ENCODE measurements at regions of chr17 and their contacts with region 1.

Region 1: GRCh38 chr17:58517734-58518609 is 3.5 kb upstream of the MTMR4 start:
- DNase-seq: peak; percentile 100
- ATAC-seq: peak; percentile 84 to 90
- H3K4me3 ChIP-seq: peak overlapping the region; percentile 72
- H3K27ac ChIP-seq: peak overlapping the region; percentile 76 to 87
- H3K4me1 ChIP-seq: peaks cover 15% of the 10 kb centered on the region
- CTCF ChIP-seq: no peak
- EP300 ChIP-seq: no peak
- POLR2A ChIP-seq: peak; percentile 48
- RAD21 ChIP-seq: no peak

Region 2: DNA sequence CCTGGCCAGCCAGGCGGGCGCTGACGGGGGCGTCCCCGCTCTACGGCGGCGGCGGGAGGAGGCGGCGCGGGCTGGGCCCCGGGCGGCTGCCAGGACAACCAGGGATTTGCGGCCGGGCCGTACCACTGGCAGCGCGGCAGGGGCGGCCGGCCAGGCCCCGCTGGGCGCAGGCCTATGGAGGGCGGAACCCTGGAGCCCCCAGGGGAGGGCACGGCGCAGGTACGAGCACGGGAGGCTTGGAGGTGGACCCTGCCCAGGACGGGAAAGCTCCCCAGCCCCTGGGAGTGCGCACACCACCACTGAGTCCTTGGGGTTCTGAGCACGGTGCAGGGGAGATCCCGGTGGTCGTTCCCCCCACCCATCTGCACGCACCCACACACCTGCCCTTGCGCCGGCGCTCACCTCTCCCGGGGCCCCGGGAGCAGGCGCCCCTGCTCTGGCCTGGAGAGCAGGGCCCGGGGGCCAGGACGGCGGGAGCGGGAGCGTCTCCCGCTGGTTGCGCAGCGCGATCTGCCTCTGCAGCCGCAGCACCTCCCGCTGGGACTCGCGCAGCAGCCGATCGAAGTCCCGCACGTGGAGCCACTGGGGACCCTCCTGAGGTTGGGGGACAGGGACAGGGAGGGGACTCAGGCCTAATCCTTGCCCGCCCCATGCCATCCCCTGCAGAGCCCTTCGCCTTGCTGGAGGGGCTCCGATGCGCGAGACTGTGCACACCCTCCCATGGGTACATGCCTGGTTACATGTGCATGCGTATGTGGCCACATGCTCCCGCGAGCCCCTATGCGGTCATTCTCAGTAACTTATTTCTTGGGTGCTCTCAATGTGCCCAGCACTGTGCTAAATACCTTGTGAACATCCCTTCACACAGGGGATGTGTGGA is 193.3 kb before region 1 on chr17:
- CTCF ChIA-PET with region 1: no interaction called
- POLR2A ChIA-PET with region 1: no interaction called
- DNase-seq: no peak
- ATAC-seq: no peak
- H3K4me3 ChIP-seq: no peak overlapping the region
- H3K27ac ChIP-seq: no peak overlapping the region
- H3K4me1 ChIP-seq: peaks cover 9% of the 10 kb centered on the region
- CTCF ChIP-seq: no peak
- EP300 ChIP-seq: no peak
- POLR2A ChIP-seq: no peak
- RAD21 ChIP-seq: no peak

Region 3: GRCh38 chr17:58411438-58411797 is 106.6 kb before region 1 on chr17:
- CTCF ChIA-PET with region 1: no interaction called
- POLR2A ChIA-PET with region 1: no interaction called
- DNase-seq: no peak
- ATAC-seq: no peak
- H3K4me3 ChIP-seq: no peak overlapping the region
- H3K27ac ChIP-seq: no peak overlapping the region
- H3K4me1 ChIP-seq: peaks cover 39% of the 10 kb centered on the region; the same call in 2 of the 3 replicates
- CTCF ChIP-seq: no peak
- EP300 ChIP-seq: no peak
- POLR2A ChIP-seq: no peak
- RAD21 ChIP-seq: no peak

Region 4: GRCh38 chr17:58492238-58493121 is 25.5 kb before region 1 on chr17:
- CTCF ChIA-PET with region 1: interaction called, 12 read pairs
- POLR2A ChIA-PET with region 1: no interaction called
- DNase-seq: no peak
- ATAC-seq: no peak
- H3K4me3 ChIP-seq: no peak overlapping the region
- H3K27ac ChIP-seq: no peak overlapping the region
- H3K4me1 ChIP-seq: no peaks in the 10 kb centered on the region
- CTCF ChIP-seq: no peak
- EP300 ChIP-seq: no peak
- POLR2A ChIP-seq: no peak
- RAD21 ChIP-seq: no peak

Region 5: GRCh38 chr17:58531661-58532554 is 13.9 kb after region 1 on chr17:
- CTCF ChIA-PET with region 1: interaction called, 187 read pairs
- POLR2A ChIA-PET with region 1: interaction called, 8 read pairs
- DNase-seq: no peak
- ATAC-seq: peak; percentile 51 to 66
- H3K4me3 ChIP-seq: peak overlapping the region; percentile 71
- H3K27ac ChIP-seq: peak overlapping the region; percentile 61 to 81
- H3K4me1 ChIP-seq: peaks cover 24% of the 10 kb centered on the region
- CTCF ChIP-seq: no peak
- EP300 ChIP-seq: no peak
- POLR2A ChIP-seq: 0 out of 2 replicates have a peak, but pooled peaks have one; percentile 7
- RAD21 ChIP-seq: no peak

Region 6: GRCh38 chr17:58587702-58588254 is 69.8 kb after region 1 on chr17:
- CTCF ChIA-PET with region 1: interaction called, 18 read pairs
- POLR2A ChIA-PET with region 1: no interaction called
- DNase-seq: peak; percentile 69 to 81
- ATAC-seq: peak; percentile 91 to 96
- H3K4me3 ChIP-seq: no peak overlapping the region
- H3K27ac ChIP-seq: no peak overlapping the region
- H3K4me1 ChIP-seq: no peaks in the 10 kb centered on the region
- CTCF ChIP-seq: peak; percentile 93
- EP300 ChIP-seq: no peak
- POLR2A ChIP-seq: no peak
- RAD21 ChIP-seq: peak; percentile 89

Region 7: GRCh38 chr17:58666858-58667619 is 149.1 kb after region 1 on chr17:
- CTCF ChIA-PET with region 1: interaction called, 10 read pairs
- POLR2A ChIA-PET with region 1: no interaction called
- DNase-seq: peak; percentile 72 to 94
- ATAC-seq: peak; percentile 91 to 93
- H3K4me3 ChIP-seq: peak overlapping the region; percentile 46
- H3K27ac ChIP-seq: peak overlapping the region; percentile 40 to 72
- H3K4me1 ChIP-seq: peaks cover 10% of the 10 kb centered on the region; the same call in 1 of the 3 replicates
- CTCF ChIP-seq: no peak
- EP300 ChIP-seq: no peak
- POLR2A ChIP-seq: no peak
- RAD21 ChIP-seq: no peak

Region 8: DNA sequence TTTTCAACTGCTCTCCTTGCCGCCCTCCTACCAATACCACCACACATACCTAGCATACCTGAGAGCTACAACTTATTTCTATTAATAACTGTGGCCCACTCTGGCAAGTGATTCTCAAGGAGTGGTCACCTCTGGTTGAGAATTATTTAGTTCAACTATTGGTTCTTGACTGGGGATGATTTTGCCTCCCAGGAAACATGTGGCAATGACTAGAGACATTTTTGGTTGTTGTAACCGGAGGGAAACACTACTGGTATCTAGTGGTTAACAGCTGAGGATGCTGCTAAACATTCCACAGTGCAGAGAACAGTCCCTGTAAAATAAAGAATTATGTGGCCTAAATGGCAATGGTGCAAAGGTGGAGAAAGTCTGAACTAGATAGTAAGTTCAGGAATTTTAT is 492.1 kb after region 1 on chr17:
- CTCF ChIA-PET with region 1: interaction called, 42 read pairs
- POLR2A ChIA-PET with region 1: interaction called, 6 read pairs
- DNase-seq: no peak
- ATAC-seq: no peak
- H3K4me3 ChIP-seq: no peak overlapping the region
- H3K27ac ChIP-seq: no peak overlapping the region
- H3K4me1 ChIP-seq: no peaks in the 10 kb centered on the region
- CTCF ChIP-seq: no peak
- EP300 ChIP-seq: no peak
- POLR2A ChIP-seq: no peak
- RAD21 ChIP-seq: no peak

Measured in A549 (cell line).